Transverse colon (tissue), 4 donors: ENCODE measurements at regions of chr16 and their contacts with region 1.

Region 1: DNA sequence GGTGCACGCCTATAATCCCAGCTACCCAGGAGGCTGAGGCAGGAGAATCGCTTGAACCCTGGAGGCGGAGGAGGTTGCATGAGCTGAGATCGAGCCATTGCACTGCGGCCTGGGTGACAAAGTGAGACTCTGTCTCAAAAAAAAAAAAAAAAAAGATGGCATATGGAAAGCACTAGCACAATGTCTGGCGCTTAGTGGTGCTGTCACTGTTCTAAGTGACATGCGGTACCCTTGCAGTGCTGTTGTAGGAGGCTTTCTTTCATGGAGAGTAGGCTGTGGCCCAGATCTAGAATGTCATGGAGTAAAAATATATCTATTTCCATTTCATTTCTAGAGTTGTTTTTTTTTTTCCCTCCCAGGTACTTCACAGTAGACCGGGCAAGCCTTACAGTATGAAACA is 14.6 kb upstream of the METTL9 start:
- DNase-seq: no peak
- H3K4me3 ChIP-seq: no peak overlapping the region
- H3K27ac ChIP-seq: no peak overlapping the region
- H3K4me1 ChIP-seq: peaks cover 0 to 6% (median 1%) of the 10 kb centered on the region in 4 donors
- H3K27me3 ChIP-seq: no peaks in the 10 kb centered on the region
- CTCF ChIP-seq: no peak
- EP300 ChIP-seq: no peak
- POLR2A ChIP-seq: no peak

Region 2: GRCh38 chr16:21126518-21126917 is 458.3 kb before region 1 on chr16:
- in situ Hi-C with region 1: no loop called
- intact Hi-C with region 1: no loop called
- DNase-seq: no peak
- H3K4me3 ChIP-seq: no peak overlapping the region
- H3K27ac ChIP-seq: no peak overlapping the region
- H3K4me1 ChIP-seq: no peaks in the 10 kb centered on the region
- H3K27me3 ChIP-seq: no peaks in the 10 kb centered on the region
- CTCF ChIP-seq: no peak
- EP300 ChIP-seq: no peak
- POLR2A ChIP-seq: no peak

Region 3: GRCh38 chr16:21638573-21638975 is 53.8 kb after region 1 on chr16:
- in situ Hi-C with region 1: loop called in 3 of 4 experiments (anchors 5 to 10 kb)
- intact Hi-C with region 1: loop called (anchors 10 kb)
- DNase-seq: no peak
- H3K4me3 ChIP-seq: no peak overlapping the region
- H3K27ac ChIP-seq: no peak overlapping the region
- H3K4me1 ChIP-seq: no peaks in the 10 kb centered on the region
- H3K27me3 ChIP-seq: no peaks in the 10 kb centered on the region
- CTCF ChIP-seq: no peak
- EP300 ChIP-seq: no peak
- POLR2A ChIP-seq: no peak

Region 4: DNA sequence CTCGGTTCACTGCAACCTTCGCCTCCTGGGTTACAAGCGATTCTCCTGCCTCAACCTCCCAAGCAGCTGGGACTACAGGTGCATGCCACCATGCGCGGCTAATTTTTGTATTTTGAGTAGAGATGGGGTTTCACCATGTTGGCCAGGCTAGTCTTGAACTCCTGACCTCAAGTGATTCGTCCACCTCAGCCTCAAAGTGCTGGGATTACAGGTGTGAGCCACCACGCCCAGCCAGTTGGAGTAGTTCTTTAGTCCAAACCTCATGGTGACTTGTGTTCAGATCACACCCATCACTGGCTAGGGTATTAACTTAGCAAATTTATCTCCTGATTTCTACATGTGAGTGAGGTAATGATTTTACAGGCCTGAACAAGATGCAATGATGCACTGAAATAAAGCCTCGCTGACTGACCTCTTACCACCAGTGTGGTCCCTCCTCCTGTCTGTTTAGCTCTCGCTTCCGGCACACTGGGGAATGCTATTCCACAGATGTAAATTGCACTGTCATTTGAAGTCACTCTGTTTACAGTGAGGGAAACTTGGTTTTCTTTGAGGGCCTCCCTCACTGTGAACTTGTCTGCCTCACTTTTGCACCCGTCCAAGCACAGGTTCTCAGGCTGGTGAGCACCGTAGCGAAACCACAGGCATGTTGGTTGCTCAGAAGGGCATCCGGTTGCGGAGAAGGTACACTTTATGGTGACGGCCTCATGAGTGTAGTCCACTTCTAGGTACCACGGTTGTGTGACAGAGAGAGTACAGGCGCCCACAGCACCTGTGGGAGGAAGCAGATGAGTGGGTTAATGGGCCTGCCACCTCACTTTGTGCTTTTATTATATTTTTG is 62.1 kb after region 1 on chr16:
- in situ Hi-C with region 1: loop called in 1 of 4 experiments (anchors 10 kb)
- intact Hi-C with region 1: loop called (anchors 10 kb)
- DNase-seq: peak; percentile 62
- H3K4me3 ChIP-seq: no peak overlapping the region
- H3K27ac ChIP-seq: peak overlapping the region; percentile 60 to 66 (median 62)
- H3K4me1 ChIP-seq: peaks cover 4 to 23% (median 14%) of the 10 kb centered on the region in 4 donors
- H3K27me3 ChIP-seq: no peaks in the 10 kb centered on the region
- CTCF ChIP-seq: no peak
- EP300 ChIP-seq: no peak
- POLR2A ChIP-seq: no peak

Region 5: GRCh38 chr16:21708533-21709115 is 123.8 kb after region 1 on chr16:
- in situ Hi-C with region 1: loop called (anchors 5 to 25 kb)
- intact Hi-C with region 1: no loop called
- DNase-seq: peak; percentile 85
- H3K4me3 ChIP-seq: no peak overlapping the region
- H3K27ac ChIP-seq: no peak overlapping the region
- H3K4me1 ChIP-seq: peaks cover 0 to 8% (median 4%) of the 10 kb centered on the region in 4 donors
- H3K27me3 ChIP-seq: no peaks in the 10 kb centered on the region
- CTCF ChIP-seq: peak; percentile 71 to 87 (median 81)
- EP300 ChIP-seq: no peak
- POLR2A ChIP-seq: no peak

Region 6: DNA sequence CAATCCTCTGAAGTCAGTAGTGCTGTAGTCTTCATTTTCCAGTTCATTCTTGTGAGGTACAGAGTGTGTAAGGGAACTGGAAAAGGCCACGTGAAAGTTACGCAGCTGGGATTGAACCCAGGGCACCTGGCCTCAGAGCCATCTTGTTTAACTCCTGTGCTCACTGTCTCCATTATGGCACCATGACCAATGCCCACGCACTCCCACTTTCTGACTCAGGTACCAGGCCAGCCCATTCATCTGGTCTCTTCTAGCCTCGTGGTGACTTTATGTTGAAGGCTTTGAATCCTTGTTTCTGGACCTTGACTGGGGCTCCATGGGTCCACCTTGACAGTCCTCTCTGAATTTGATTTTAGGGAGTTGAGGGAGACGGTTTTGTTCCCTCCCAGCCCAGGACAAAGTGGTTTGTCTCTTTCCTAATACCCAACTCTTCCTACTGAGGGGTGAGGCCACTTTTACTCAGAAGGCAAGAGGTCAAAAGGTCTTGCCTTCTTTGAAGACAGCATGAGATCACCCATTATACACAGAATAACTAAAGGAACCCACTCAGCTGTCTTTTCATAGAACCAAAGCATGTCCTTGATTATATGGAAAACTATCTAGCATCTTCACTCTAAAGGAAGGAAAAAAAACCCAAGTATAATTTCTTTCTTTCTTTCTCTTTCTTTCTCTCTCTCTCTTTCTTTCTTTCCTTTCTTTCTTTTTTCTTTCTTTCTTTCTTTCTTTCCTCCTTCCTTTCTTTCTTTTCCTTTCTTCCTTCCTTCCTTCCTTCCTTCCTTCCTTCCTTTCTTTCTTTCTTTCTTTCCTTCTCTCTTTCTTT is 128.9 kb after region 1 on chr16:
- in situ Hi-C with region 1: loop called (anchors 5 to 25 kb)
- intact Hi-C with region 1: no loop called
- DNase-seq: no peak
- H3K4me3 ChIP-seq: no peak overlapping the region
- H3K27ac ChIP-seq: no peak overlapping the region
- H3K4me1 ChIP-seq: peaks cover 0 to under 1% (median under 1%) of the 10 kb centered on the region in 4 donors
- H3K27me3 ChIP-seq: no peaks in the 10 kb centered on the region
- CTCF ChIP-seq: no peak
- EP300 ChIP-seq: no peak
- POLR2A ChIP-seq: no peak

Region 7: DNA sequence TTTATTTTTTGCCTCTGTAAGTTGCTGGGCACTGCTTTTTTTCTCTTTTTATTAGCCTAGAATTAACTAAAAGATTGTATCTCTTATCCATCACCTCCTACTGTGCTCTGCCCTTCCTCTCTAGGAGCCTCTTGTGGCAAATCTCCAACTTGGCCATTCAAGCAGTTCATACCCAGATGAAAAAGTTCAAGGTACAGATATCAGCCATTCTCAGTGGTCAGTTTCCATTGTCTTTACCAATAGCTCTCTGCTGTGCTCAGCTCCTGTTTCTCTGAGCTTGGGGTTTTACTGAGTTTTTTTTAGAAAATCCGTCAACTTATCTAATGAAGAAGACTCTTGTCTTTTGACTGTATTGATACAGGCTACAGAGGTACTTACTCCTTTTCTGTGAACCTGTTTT is 438.7 kb after region 1 on chr16:
- in situ Hi-C with region 1: no loop called
- intact Hi-C with region 1: no loop called
- DNase-seq: no peak
- H3K4me3 ChIP-seq: no peak overlapping the region
- H3K27ac ChIP-seq: no peak overlapping the region
- H3K4me1 ChIP-seq: peaks cover 8 to 21% (median 15%) of the 10 kb centered on the region in 4 donors
- H3K27me3 ChIP-seq: no peaks in the 10 kb centered on the region
- CTCF ChIP-seq: no peak
- EP300 ChIP-seq: no peak
- POLR2A ChIP-seq: no peak

Region 8: GRCh38 chr16:22055878-22056277 is 471.1 kb after region 1 on chr16:
- in situ Hi-C with region 1: no loop called
- intact Hi-C with region 1: no loop called
- DNase-seq: no peak
- H3K4me3 ChIP-seq: no peak overlapping the region
- H3K27ac ChIP-seq: no peak overlapping the region
- H3K4me1 ChIP-seq: no peaks in the 10 kb centered on the region
- H3K27me3 ChIP-seq: no peaks in the 10 kb centered on the region
- CTCF ChIP-seq: no peak
- EP300 ChIP-seq: no peak
- POLR2A ChIP-seq: no peak

Region 9: DNA sequence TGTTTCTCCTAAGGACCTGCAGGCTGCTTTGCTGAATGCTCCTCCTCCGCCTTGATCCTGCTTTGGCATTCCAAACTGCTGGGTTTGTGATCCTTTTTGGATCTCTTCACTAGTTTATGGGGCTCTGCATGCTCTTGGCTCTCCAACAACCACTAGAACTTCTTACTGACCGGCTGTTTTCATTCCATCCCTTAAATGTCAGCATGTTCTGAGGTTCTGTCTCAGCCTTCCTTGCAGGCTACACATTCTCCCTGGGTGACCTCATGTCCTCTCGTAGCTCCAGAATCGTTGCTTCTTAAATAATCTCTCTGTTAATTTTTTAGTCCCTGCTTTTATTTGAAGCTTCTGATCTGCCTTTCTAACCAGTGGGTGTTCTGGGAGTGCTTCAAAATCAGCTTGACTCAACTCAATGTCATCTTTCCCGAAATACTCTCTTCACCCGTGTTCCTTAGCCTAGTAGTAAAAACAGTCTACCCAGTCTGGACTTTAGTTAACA is 1110.1 kb after region 1 on chr16:
- in situ Hi-C with region 1: loop called in 3 of 4 experiments (anchors 5 kb)
- intact Hi-C with region 1: no loop called
- DNase-seq: peak; percentile 22
- H3K4me3 ChIP-seq: no peak overlapping the region
- H3K27ac ChIP-seq: peak overlapping the region; percentile 62 to 81 (median 74)
- H3K4me1 ChIP-seq: peaks cover 6 to 21% (median 13%) of the 10 kb centered on the region in 4 donors
- H3K27me3 ChIP-seq: peaks cover 6% of the 10 kb centered on the region
- CTCF ChIP-seq: no peak
- EP300 ChIP-seq: peak; percentile 42
- POLR2A ChIP-seq: no peak